Naive thymus-derived CD4-positive, alpha-beta T cell (primary cell): ENCODE measurements at regions of chr6 and their contacts with region 1.

Region 1: GRCh38 chr6:129598244-129599187 is 111.5 kb downstream of the ARHGAP18 start:
- DNase-seq: peak in 7 of 9 donors; percentile 37 to 79 (median 70)
- ATAC-seq: peak; percentile 95
- H3K4me3 ChIP-seq: no peak overlapping the region
- H3K4me3 Mint-ChIP-seq: no peak overlapping the region
- H3K27ac ChIP-seq: no peak overlapping the region
- H3K27ac Mint-ChIP-seq: no peak overlapping the region
- H3K4me1 ChIP-seq: no peaks in the 10 kb centered on the region
- H3K4me1 Mint-ChIP-seq: peaks cover 0 to 2% (median 0%) of the 10 kb centered on the region in 7 donors
- H3K27me3 ChIP-seq: no peaks in the 10 kb centered on the region
- H3K27me3 Mint-ChIP-seq: peaks cover 0 to 3% (median 0%) of the 10 kb centered on the region in 5 donors

Region 2: DNA sequence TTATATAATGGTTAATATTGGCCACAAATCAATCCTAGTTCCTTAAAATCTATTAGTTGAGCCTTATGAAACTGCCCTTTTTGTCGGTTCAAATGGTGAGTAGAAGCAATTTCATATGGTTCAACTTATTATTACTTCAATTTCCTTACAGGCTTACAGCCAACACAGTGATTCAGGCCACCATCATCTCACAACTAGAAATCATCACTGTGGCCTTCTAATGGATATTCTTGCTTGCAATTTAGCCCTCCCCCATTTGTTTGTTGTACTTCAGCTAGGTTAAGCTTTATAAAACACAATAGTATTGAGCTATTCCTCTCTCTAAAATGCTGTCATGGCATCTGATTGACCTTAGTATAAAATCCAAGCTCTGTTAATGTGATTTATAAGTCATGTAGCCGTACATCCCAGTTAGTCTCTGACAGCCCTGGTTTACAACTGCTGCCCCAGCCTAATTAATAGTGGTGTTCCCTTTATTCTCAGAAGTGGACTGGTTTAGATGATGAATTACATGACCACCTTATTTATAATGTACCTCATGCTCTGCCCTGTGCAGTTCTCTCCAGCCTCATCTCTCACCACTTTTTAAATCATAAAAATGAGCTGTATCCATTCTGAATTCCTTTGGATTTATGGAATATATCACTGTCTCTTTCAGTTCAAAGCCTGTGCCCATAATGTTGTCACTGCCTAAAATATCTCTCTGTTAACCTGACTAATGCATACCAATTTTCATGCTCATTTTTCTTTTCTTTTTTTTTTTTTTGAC is 678.9 kb before region 1 on chr6:
- CTCF ChIA-PET with region 1: no interaction called
- POLR2A ChIA-PET with region 1: no interaction called
- intact Hi-C with region 1: no loop called
- DNase-seq: no peak
- ATAC-seq: no peak
- H3K4me3 ChIP-seq: no peak overlapping the region
- H3K4me3 Mint-ChIP-seq: no peak overlapping the region
- H3K27ac ChIP-seq: no peak overlapping the region
- H3K27ac Mint-ChIP-seq: no peak overlapping the region
- H3K4me1 ChIP-seq: no peaks in the 10 kb centered on the region
- H3K4me1 Mint-ChIP-seq: no peaks in the 10 kb centered on the region
- H3K27me3 ChIP-seq: no peaks in the 10 kb centered on the region
- H3K27me3 Mint-ChIP-seq: peaks cover 0 to 4% (median 3%) of the 10 kb centered on the region in 5 donors

Region 3: DNA sequence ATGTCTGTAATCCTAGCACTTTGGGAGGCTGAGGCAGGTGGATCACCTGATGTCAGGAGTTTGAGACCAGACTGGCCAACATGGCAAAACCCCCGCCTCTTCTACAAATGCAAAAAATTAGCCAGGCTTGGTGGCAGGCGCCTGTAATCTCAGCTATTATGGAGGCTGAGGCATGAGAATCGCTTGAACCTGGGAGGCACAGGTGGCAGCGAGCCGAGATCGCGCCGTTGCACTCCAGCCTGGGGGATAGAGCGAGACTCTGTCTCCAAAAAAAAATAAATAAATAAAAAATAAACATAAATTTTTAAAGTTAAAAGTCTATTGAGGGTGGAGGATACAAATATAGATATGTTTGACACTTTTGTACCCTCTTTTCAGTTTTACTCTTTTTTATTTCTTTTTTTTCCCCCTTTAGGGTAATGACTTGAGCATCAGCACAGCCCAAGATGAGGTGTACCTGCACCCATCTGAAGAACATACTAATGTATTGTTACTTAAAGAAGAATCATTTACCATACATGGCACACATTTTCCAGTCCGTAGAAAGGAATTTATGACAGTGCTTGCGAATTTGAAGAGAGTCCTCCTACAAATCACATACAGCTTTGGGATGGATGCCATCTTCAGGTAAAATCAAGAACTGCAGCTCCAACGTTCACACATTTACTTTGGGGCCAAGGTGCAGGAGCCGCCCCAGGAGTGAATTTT is 346.7 kb before region 1 on chr6:
- CTCF ChIA-PET with region 1: no interaction called
- POLR2A ChIA-PET with region 1: no interaction called
- intact Hi-C with region 1: no loop called
- DNase-seq: peak in 7 of 9 donors; percentile 1 to 35 (median 25)
- ATAC-seq: peak; percentile 59
- H3K4me3 ChIP-seq: no peak overlapping the region
- H3K4me3 Mint-ChIP-seq: no peak overlapping the region
- H3K27ac ChIP-seq: no peak overlapping the region
- H3K27ac Mint-ChIP-seq: no peak overlapping the region
- H3K4me1 ChIP-seq: no peaks in the 10 kb centered on the region
- H3K4me1 Mint-ChIP-seq: peaks cover 0 to 8% (median 0%) of the 10 kb centered on the region in 7 donors
- H3K27me3 ChIP-seq: no peaks in the 10 kb centered on the region
- H3K27me3 Mint-ChIP-seq: peaks cover 11 to 43% (median 29%) of the 10 kb centered on the region in 5 donors

Region 4: DNA sequence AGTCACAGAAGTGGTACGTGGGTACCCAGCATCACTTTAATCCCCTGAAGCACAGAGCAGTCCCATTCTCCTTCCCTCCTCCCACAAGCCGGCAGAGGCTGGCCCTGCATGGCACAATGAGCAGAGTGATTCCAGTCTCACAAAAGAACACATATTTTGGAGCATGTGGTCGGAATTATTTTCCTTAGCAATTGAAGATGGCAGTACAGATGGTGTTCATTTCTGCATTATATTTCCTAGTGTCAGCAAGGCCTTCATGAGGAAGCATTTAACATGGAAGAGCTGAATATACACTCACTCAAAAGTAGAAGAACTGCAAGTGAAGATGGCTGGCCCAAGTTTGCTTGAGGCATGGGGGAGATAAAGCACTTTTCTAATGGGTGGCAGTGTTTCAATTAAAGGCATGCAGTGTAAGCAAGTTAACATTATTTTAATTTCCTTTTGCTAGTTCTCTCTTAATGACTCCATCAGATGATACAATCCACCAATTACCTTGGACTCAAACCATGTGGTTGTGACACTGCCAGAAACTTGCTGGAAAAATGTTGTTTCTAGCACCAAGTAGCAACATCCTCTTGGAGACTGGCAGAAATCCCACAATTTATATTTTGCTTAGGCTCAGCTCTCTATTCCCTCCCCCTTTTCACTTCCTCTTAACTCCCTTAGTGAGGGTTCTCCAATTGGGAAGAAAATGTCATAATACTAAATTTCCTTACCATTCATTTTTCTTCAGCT is 37.0 kb after region 1 on chr6:
- CTCF ChIA-PET with region 1: no interaction called
- POLR2A ChIA-PET with region 1: no interaction called
- intact Hi-C with region 1: no loop called
- DNase-seq: no peak
- ATAC-seq: no peak
- H3K4me3 ChIP-seq: no peak overlapping the region
- H3K4me3 Mint-ChIP-seq: no peak overlapping the region
- H3K27ac ChIP-seq: no peak overlapping the region
- H3K27ac Mint-ChIP-seq: peak overlapping the region in 1 of 9 donors; percentile 33
- H3K4me1 ChIP-seq: no peaks in the 10 kb centered on the region
- H3K4me1 Mint-ChIP-seq: peaks cover 0 to 3% (median 0%) of the 10 kb centered on the region in 7 donors
- H3K27me3 ChIP-seq: no peaks in the 10 kb centered on the region
- H3K27me3 Mint-ChIP-seq: no peaks in the 10 kb centered on the region

Region 5: DNA sequence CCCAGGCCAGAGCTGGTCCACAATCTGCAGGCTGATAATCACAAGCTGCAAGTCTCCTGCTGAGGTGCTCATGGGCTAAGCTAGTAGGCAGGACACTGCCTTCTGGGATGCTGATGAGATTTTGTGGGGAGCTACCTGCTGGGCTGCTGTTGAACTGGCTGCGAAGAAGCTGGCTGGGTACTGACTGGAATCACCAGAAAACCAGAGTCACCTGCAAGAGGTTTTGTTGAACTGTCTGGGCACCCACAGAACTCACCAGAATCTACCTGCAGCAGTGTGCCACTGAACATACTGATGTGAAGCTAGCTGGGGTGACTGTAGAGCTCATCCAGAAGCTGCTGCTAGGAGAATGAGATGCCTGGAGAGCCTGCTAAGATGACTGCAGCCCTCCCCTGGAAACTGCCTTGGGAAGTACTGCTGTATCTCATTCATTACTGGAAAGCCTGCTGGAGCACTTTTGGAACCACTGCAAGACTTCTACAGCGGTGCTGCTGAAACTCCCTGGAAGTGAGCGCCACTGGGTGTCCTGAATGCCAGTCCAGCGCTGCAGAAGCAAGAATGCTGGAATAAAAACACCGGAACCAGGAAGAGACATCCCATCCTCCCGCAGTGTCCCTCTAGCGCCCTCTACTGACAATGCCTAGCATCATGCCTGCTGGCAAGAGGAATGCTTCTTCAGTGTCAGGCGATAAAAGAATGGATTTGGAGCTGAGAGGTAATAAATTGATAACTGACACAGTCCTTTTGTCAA is 176.4 kb after region 1 on chr6:
- CTCF ChIA-PET with region 1: interaction called, 4 read pairs
- POLR2A ChIA-PET with region 1: no interaction called
- intact Hi-C with region 1: loop called in 1 of 2 experiments (anchors 1 kb)
- DNase-seq: peak in 7 of 9 donors; percentile 4 to 35 (median 24)
- ATAC-seq: peak; percentile 63
- H3K4me3 ChIP-seq: no peak overlapping the region
- H3K4me3 Mint-ChIP-seq: no peak overlapping the region
- H3K27ac ChIP-seq: no peak overlapping the region
- H3K27ac Mint-ChIP-seq: no peak overlapping the region
- H3K4me1 ChIP-seq: no peaks in the 10 kb centered on the region
- H3K4me1 Mint-ChIP-seq: peaks cover 0 to 5% (median 3%) of the 10 kb centered on the region in 7 donors
- H3K27me3 ChIP-seq: no peaks in the 10 kb centered on the region
- H3K27me3 Mint-ChIP-seq: peaks cover 0 to 39% (median 0%) of the 10 kb centered on the region in 5 donors

Region 6: DNA sequence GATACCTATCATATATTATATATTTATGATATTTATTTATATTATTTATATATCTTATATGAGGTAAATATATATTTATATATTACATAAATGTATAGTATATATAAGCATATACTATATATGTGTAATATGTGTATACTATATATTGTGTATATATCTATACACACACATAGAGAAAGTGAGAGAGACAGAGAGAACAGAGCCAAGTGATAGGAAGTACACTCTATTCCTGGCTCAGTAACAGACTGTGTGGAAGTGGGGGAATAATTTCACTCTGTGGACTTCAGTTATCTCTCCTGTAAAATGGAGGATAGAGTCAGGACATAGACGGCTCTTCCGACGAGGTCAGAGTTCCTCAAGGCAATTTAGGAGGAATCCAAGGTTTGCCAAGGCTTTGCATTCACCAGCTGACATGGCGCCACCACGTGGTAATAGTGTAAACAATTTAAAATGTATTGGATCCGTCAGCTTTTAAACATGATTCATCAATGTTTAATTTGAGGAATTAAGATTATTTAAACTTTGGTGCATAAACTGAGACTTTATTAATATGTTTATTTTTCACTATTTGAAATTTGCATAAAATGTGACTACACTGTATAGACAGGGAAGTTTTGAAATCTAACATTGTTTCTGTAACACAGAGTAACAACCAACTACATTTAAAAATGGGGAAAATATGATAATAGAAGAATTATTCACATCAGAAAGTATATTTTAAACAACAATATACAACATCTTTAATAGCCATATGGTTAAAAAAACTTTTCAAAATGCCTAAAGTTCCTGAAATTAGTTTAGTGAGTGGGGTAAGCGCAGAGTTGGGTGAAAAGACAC is 338.0 kb after region 1 on chr6:
- CTCF ChIA-PET with region 1: interaction called, 3 read pairs
- POLR2A ChIA-PET with region 1: no interaction called
- intact Hi-C with region 1: loop called (anchors 1 kb)
- DNase-seq: peak in 5 of 9 donors; percentile 21 to 47 (median 28)
- ATAC-seq: peak; percentile 77
- H3K4me3 ChIP-seq: no peak overlapping the region
- H3K4me3 Mint-ChIP-seq: no peak overlapping the region
- H3K27ac ChIP-seq: no peak overlapping the region
- H3K27ac Mint-ChIP-seq: no peak overlapping the region
- H3K4me1 ChIP-seq: no peaks in the 10 kb centered on the region
- H3K4me1 Mint-ChIP-seq: peaks cover 0 to 3% (median 0%) of the 10 kb centered on the region in 7 donors
- H3K27me3 ChIP-seq: no peaks in the 10 kb centered on the region
- H3K27me3 Mint-ChIP-seq: peaks cover 19 to 32% (median 24%) of the 10 kb centered on the region in 5 donors